K562 (cell line): ENCODE measurements at regions of chr1 and their contacts with region 1.

Region 1: GRCh38 chr1:80961464-80962190 is 839.1 kb upstream of the ADGRL2 start:
- DNase-seq: no peak
- ATAC-seq: no peak
- H3K4me3 ChIP-seq: no peak overlapping the region
- H3K27ac ChIP-seq: no peak overlapping the region
- H3K4me1 ChIP-seq: no peaks in the 10 kb centered on the region
- H3K27me3 ChIP-seq: no peaks in the 10 kb centered on the region
- CTCF ChIP-seq: no peak
- EP300 ChIP-seq: no peak
- POLR2A ChIP-seq: no peak
- RAD21 ChIP-seq: no peak

Region 2: DNA sequence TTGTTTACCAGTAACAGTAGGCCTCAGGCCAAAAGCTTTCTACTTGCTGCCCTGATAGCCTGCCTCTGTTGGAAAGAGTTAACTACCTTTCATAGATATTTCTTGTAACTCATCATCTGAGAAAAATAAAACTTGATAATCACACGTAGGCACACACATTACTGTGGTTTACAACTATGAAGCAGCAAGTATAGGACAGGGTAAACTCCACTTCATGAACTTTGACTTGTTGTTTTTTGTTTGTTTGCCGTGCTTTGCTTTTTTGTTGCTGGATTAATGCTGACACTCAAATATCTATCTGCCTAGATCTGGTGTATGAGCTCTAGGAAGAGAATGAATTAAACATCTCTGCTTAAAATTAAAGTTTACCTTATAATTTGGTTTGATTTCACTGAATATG is 85.6 kb before region 1 on chr1:
- CTCF ChIA-PET with region 1: no interaction called
- POLR2A ChIA-PET with region 1: no interaction called
- in situ Hi-C with region 1: no loop called
- intact Hi-C with region 1: no loop called
- DNase-seq: no peak
- ATAC-seq: no peak
- H3K4me3 ChIP-seq: no peak overlapping the region
- H3K27ac ChIP-seq: no peak overlapping the region
- H3K4me1 ChIP-seq: no peaks in the 10 kb centered on the region
- H3K27me3 ChIP-seq: no peaks in the 10 kb centered on the region
- CTCF ChIP-seq: no peak
- EP300 ChIP-seq: no peak
- POLR2A ChIP-seq: no peak
- RAD21 ChIP-seq: no peak

Region 3: DNA sequence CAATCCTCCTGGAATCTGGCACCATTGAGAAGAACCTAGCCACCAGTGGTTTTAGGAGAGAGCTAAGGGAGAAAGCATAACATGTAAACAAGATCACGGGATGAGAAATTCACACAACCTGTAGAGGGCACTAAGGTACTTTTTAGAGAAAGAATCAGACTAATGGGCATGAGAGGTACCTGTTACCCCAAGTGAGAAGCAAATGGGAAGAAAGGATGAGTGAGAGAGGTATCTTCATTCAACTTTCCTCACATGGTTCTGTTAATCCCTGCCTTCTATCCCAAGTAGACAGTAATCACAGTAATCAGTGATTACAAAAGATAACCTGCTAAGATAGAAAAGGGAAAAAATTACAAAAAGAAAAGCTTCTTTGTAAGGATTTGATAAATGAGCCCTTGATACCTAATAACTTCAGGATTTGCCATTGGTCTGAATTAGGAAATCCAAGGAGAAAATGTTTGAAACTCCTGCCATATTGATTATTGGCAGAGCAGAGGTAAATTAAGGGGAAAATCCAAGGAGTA is 588.0 kb after region 1 on chr1:
- CTCF ChIA-PET with region 1: no interaction called
- POLR2A ChIA-PET with region 1: no interaction called
- in situ Hi-C with region 1: loop called (anchors 25 kb)
- intact Hi-C with region 1: no loop called
- DNase-seq: no peak
- ATAC-seq: no peak
- H3K4me3 ChIP-seq: no peak overlapping the region
- H3K27ac ChIP-seq: no peak overlapping the region
- H3K4me1 ChIP-seq: no peaks in the 10 kb centered on the region
- H3K27me3 ChIP-seq: no peaks in the 10 kb centered on the region
- CTCF ChIP-seq: no peak
- EP300 ChIP-seq: no peak
- POLR2A ChIP-seq: no peak
- RAD21 ChIP-seq: no peak